Ascending aorta (tissue), 2 donors: ENCODE measurements at regions of chr3 and their contacts with region 1.

Region 1: DNA sequence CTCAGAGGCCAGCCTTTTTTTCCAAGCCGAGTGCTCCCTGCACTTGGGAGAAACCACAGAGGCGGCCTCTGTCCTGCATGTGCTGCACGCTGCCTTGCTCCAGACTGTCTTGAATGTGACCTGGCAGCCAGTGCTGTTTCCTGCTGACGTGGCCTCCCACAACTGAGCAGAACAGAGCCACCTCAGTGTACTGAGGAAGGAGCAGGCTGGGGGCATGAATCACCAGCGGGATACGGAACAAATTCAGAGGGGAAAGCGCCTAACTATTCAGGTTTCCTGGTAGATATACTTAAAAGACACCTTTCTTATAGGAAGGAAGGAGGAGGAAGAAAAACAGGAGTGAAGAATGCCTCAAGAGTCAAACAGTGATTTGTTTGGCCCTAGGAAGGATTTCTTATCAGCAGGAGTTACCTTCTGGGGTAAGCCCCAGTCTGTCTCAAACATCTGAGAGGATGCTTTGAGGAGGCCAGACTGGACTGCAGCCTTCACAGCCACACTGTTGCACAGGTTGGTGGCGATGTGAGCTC is 114.0 kb downstream of the FNDC3B start:
- DNase-seq: peak; percentile 95 to 98
- H3K4me3 ChIP-seq: peak overlapping the region; percentile 15 to 41
- H3K27ac ChIP-seq: peak overlapping the region; percentile 92 to 97
- H3K4me1 ChIP-seq: peaks cover 38 to 47% of the 10 kb centered on the region in 2 donors
- H3K27me3 ChIP-seq: no peaks in the 10 kb centered on the region
- CTCF ChIP-seq: no peak

Region 2: GRCh38 chr3:172138795-172139441 is 14.5 kb before region 1 on chr3:
- intact Hi-C with region 1: no loop called
- DNase-seq: peak in 1 of 2 donors; percentile 83
- H3K4me3 ChIP-seq: no peak overlapping the region
- H3K27ac ChIP-seq: peak overlapping the region; percentile 65 to 77
- H3K4me1 ChIP-seq: peaks cover 11 to 51% of the 10 kb centered on the region in 2 donors
- H3K27me3 ChIP-seq: no peaks in the 10 kb centered on the region
- CTCF ChIP-seq: no peak

Region 3: GRCh38 chr3:172201136-172201869 is 47.9 kb after region 1 on chr3:
- intact Hi-C with region 1: loop called (anchors 2 kb)
- DNase-seq: peak; percentile 12 to 72
- H3K4me3 ChIP-seq: no peak overlapping the region
- H3K27ac ChIP-seq: peak overlapping the region; percentile 75 to 88
- H3K4me1 ChIP-seq: peaks cover 11 to 46% of the 10 kb centered on the region in 2 donors
- H3K27me3 ChIP-seq: no peaks in the 10 kb centered on the region
- CTCF ChIP-seq: no peak

Region 4: DNA sequence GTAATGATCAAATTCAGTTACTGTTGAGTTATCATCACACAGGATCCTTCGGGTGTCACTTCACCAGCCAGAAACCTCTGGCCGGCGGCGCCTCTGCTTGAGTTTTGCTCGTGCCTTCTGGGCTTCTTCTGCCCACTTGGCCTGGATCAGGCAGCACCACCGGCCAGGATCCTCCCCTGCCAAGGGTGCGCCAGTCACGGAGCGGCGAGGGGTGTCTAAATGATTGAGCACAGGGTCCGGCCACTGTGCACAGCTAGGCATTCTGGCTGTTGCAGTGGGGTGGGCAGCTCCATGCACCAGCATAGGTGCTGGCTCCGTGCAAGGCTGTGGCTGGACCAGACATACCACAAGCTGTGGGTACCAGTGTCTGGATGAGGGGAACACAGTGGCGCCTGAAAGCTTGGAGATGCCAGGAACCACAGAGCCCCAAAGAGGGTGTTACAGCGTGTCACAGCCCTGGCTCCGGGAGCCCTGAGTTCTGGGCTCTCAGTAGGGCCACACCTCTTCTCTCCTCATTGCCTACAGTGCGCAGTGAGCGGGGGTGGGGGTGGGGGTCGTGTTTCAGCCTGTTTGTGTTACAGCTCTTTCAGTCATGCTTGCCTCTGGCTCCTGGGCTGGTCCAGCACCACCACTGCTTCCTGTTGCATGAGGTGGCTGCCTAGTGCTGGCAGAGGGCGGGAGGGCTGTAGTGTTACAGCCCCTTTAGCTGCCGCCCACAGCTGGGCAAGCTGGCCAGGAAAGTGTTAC is 55.4 kb after region 1 on chr3:
- intact Hi-C with region 1: loop called (anchors 2 kb)
- DNase-seq: peak; percentile 37 to 83
- H3K4me3 ChIP-seq: peak overlapping the region; percentile 3 to 51
- H3K27ac ChIP-seq: peak overlapping the region; percentile 89 to 95
- H3K4me1 ChIP-seq: peaks cover 21 to 74% of the 10 kb centered on the region in 2 donors
- H3K27me3 ChIP-seq: no peaks in the 10 kb centered on the region
- CTCF ChIP-seq: no peak

Region 5: DNA sequence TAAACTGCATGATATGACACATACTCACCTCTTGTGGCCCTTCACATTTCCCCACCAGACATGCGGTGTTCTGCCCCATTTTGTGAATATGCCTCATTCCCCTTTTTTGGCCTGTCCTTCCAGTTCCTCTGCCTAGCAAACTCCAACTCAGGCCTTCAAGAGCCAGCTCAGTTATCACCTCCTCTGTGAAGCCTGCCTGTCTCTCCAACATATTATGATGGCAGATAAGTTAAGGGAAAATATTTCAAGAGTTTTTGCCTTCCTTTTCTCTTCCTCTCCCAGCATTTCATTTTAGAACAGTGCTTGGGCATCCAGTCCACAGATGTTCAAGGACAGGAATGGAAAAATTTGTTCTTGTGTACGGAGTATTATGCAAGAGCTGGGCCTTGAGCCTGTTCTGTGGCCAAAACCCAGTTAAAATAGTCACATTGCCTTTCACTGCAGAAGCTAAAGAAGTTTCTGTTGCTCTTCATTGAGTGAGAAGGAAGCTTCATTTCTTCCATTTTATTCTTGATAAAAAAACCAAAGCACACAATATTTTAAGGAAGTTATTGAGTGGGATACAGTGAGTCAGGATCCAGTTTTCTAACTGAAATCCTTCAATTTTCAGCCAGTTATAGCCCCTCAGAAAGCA is 102.8 kb after region 1 on chr3:
- intact Hi-C with region 1: loop called (anchors 5 kb)
- DNase-seq: peak in 1 of 2 donors; percentile 83
- H3K4me3 ChIP-seq: no peak overlapping the region
- H3K27ac ChIP-seq: peak overlapping the region; percentile 89 to 91
- H3K4me1 ChIP-seq: peaks cover 25 to 54% of the 10 kb centered on the region in 2 donors
- H3K27me3 ChIP-seq: no peaks in the 10 kb centered on the region
- CTCF ChIP-seq: no peak

Region 6: GRCh38 chr3:172280406-172281051 is 127.1 kb after region 1 on chr3:
- intact Hi-C with region 1: no loop called
- DNase-seq: no peak
- H3K4me3 ChIP-seq: no peak overlapping the region
- H3K27ac ChIP-seq: peak overlapping the region; percentile 51 to 60
- H3K4me1 ChIP-seq: peaks cover 3 to 65% of the 10 kb centered on the region in 2 donors
- H3K27me3 ChIP-seq: no peaks in the 10 kb centered on the region
- CTCF ChIP-seq: no peak